ENCODE measurements at regions of chr20 and their contacts with region 1.

Region 1: DNA sequence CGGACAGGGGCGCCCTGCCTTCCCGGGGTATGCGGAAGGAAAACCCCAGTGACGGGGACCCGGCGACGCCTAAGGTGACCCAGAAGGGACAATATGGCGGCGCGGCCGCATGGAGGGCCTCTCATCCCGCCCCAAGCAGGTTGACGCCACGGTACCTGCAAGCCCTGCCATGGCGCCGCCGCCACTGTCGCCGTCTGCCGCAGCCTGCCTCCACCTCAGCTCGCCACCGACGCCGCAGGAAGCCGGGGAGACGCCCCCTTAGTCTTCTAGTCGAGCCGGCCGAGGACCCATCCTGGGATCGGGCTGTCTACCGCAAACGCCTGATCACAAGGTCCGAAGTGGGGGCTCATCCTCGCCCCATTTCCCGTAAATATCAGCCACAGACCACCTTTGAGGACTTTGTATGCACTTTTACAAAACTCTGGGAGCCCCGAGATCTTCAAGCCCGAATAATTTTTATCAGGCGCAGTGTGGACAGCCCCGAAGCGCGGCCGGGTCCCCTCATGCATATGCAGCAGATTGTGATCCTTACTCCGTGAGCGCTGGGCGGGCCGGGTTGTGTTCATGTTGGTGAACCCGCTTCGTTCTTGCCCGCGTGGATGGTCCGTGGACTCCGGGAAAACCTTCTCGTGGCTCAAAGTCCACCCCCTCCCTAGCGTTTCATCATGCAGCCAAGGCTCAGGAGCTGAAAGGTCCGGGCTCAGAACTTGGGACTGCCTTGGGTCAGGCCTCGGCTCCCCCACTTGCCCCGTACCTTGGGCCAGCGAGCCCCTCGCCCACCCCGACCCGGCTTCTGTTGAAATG is at the start of gene BLCAP:
- DNase-seq: peak; percentile 84 to 95 (median 86)
- ATAC-seq: peak; percentile 92 to 96 (median 93)
- H3K4me3 ChIP-seq: peak within 1 kb of the TSS; percentile 91 to 99 (median 96)
- H3K27ac ChIP-seq: peak within 1 kb of the TSS; percentile 96 to 98 (median 98)
- H3K4me1 ChIP-seq: peaks cover 5 to 14% (median 6%) of the 10 kb centered on the region in 3 donors
- H3K27me3 ChIP-seq: no peaks in the 10 kb centered on the region
- CTCF ChIP-seq: no peak
- total RNA-seq, gene BLCAP: 14.6 to 27.9 (median 16.9) TPM

Region 2: DNA sequence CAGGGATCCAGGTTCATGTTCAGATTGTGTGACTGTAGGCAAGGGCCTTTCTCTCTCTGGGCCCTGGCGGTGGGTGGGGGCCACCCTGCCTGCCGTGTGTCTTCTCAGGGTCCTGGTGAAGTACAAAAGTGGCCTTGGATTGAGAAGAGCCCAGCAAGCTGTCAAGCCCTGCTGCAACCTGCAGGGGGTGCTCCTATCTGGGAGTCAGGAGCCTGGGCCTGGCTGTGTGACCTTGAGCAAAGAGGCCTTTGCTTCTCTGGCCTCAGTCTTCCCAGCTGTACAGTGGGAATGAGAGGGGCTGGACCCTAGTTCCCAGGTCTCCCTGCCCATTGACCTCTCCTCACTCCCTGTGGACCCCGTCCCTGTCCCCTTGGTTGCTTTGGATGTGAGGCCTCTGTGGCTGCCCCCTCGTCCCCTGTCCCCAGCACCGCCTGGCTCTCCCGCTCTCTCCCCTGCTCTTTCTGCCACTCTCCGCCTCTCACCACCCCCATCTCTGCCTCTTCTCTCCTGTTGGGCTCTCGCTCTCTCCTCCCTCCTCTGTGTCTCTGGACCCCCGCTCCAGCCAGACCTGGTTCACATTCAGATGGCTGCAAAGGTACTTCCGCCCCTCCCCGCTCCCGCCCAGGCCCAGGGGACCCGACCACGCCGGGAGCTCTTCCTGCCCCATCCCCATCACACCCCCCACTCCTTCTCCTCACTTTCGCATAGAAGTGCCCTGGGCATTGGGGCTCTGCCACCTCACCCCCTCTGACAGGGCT is 135.2 kb before region 1 on chr20:
- intact Hi-C with region 1: loop called in 1 of 3 experiments (anchors 10 kb)
- DNase-seq: peak in 2 of 6 donors; percentile 39 to 49
- ATAC-seq: no peak
- H3K4me3 ChIP-seq: no peak overlapping the region
- H3K27ac ChIP-seq: no peak overlapping the region
- H3K4me1 ChIP-seq: no peaks in the 10 kb centered on the region
- H3K27me3 ChIP-seq: no peaks in the 10 kb centered on the region
- CTCF ChIP-seq: no peak

Measured in pancreas (tissue), 10 donors.